ENCODE measurements at regions of chr6 and their contacts with region 1.

Region 1: DNA sequence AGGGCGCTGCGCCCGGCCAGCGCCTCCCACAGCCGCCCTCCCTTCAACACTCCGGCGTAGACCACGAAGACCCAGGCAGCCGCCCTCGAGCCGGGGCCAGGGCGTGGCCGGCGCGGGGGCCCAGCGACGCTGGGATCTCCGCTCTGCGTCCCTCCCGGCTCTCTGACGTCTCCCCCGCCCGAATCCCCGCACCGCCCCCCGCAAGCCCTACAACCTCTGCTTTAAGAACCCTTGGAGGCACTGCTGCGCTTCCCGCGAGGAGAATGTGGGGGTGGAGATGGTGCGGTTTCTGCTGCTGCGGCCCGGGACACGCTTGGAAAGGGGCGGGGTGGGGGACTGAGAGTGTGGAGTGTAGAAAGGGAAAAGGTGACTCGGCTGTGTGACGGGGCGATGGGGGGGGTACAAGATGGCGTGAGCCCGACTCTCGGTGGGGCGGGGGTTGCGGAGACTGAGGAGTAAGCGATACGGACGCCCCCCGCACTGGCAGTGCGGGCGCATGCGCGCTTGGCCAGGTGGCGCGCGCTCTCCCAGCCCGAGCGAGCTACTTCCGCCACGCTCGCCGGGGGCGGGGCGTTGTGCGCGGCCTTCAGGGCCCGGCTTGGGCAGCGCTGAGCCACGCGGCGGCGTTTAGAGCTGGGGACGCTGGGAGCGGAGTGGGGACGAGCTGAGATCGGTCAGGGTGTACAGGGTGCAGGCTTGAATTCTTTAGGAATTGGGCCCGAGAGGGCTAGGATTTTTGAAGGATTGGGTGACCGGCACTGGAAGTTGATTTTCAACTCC is at the start of gene SUPT3H:
- DNase-seq: peak; percentile 97
- ATAC-seq: peak; percentile 89
- H3K4me3 Mint-ChIP-seq: peak within 1 kb of the TSS; percentile 99
- H3K27ac Mint-ChIP-seq: peak within 1 kb of the TSS; percentile 100
- H3K4me1 Mint-ChIP-seq: peaks cover 22% of the 10 kb centered on the region
- H3K27me3 Mint-ChIP-seq: no peaks in the 10 kb centered on the region
- total RNA-seq, gene SUPT3H: 15.5 TPM

Region 2: DNA sequence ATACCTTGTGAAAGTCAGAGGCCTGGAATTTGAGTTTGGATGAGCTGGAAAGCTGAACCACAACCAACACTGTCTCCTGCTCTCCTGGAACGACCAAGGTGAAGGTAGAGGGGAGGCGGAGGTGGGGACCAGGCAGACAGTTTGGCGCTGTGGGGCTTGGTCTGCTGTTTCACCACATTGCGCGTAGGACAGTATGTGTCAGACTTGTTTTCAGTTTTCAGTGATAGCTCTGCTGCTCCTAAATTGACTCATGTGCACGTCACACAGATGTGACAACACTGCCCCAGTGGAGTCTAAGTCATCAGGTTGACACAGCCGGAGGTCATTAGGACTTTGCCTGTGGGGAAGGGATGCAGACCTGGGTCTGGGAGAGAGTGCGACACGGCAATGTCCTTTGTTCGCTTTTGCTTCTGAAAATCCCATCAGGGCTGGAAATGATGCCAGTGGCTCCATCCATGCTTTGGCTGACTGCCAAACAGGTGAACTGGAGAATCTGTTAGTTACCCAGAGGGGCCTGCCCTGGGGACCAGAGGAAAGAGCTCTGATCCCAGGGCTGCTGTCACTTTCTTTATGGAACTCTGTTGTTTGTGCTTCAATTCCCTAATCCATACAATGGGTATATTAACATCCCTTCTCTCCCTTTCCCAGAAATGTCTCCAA is 734.7 kb before region 1 on chr6:
- CTCF ChIA-PET with region 1: no interaction called
- POLR2A ChIA-PET with region 1: no interaction called
- intact Hi-C with region 1: loop called in 1 of 2 experiments (anchors 5 kb)
- DNase-seq: peak; percentile 85
- ATAC-seq: peak; percentile 87
- H3K4me3 Mint-ChIP-seq: peak overlapping the region; percentile 21
- H3K27ac Mint-ChIP-seq: peak overlapping the region; percentile 93
- H3K4me1 Mint-ChIP-seq: peaks cover 38% of the 10 kb centered on the region
- H3K27me3 Mint-ChIP-seq: peaks cover 2% of the 10 kb centered on the region

Region 3: GRCh38 chr6:44906761-44907160 is 471.0 kb before region 1 on chr6:
- CTCF ChIA-PET with region 1: no interaction called
- POLR2A ChIA-PET with region 1: no interaction called
- intact Hi-C with region 1: no loop called
- DNase-seq: no peak
- ATAC-seq: no peak
- H3K4me3 Mint-ChIP-seq: no peak overlapping the region
- H3K27ac Mint-ChIP-seq: no peak overlapping the region
- H3K4me1 Mint-ChIP-seq: peaks cover 5% of the 10 kb centered on the region
- H3K27me3 Mint-ChIP-seq: no peaks in the 10 kb centered on the region

Region 4: GRCh38 chr6:44932651-44933091 is 445.1 kb before region 1 on chr6:
- CTCF ChIA-PET with region 1: no interaction called
- POLR2A ChIA-PET with region 1: no interaction called
- intact Hi-C with region 1: loop called in 1 of 2 experiments (anchors 5 kb)
- DNase-seq: peak; percentile 55
- ATAC-seq: peak; percentile 42
- H3K4me3 Mint-ChIP-seq: peak overlapping the region; percentile 67
- H3K27ac Mint-ChIP-seq: peak overlapping the region; percentile 81
- H3K4me1 Mint-ChIP-seq: peaks cover 52% of the 10 kb centered on the region
- H3K27me3 Mint-ChIP-seq: no peaks in the 10 kb centered on the region

Region 5: DNA sequence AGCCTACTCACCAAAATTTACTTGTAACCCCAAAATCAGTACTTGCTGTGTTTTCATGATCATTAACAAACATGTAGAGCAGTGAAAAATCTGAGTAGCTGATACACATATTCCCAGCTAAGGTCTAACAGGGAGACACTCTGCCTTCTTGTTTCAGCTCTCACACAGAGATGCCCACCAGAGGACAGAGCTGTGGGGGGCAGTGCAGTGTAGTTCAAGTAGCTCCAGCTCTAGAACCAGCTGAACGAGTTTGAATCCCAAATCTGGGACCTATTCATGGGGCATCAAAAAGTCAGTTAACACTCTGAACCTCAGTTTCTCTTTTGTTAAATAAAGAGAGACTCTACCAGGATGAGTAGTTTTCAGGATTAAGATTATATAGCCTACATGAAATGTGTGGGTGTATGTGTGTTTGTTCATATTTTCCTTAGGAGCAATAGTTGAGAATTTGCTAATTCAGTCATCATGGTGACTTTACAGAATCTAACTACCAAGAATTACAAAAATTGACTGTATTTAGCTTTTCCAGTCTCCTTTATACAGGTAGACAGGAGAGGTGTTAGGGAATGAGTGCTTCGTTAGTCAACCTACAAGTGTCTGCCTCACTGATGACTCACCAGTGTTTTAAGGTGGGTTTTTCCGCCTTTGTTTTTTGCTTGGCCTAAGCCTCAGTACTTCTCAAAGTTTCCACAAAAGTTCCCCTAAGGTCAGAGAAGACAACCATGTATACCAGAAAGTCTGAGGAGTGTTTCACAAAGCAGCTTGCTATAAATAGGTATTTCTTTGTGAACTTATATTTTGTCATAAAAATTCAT is 213.6 kb before region 1 on chr6:
- CTCF ChIA-PET with region 1: no interaction called
- POLR2A ChIA-PET with region 1: no interaction called
- intact Hi-C with region 1: loop called (anchors 1 kb)
- DNase-seq: peak; percentile 61
- ATAC-seq: peak; percentile 92
- H3K4me3 Mint-ChIP-seq: peak overlapping the region; percentile 21
- H3K27ac Mint-ChIP-seq: peak overlapping the region; percentile 93
- H3K4me1 Mint-ChIP-seq: peaks cover 47% of the 10 kb centered on the region
- H3K27me3 Mint-ChIP-seq: no peaks in the 10 kb centered on the region

Region 6: DNA sequence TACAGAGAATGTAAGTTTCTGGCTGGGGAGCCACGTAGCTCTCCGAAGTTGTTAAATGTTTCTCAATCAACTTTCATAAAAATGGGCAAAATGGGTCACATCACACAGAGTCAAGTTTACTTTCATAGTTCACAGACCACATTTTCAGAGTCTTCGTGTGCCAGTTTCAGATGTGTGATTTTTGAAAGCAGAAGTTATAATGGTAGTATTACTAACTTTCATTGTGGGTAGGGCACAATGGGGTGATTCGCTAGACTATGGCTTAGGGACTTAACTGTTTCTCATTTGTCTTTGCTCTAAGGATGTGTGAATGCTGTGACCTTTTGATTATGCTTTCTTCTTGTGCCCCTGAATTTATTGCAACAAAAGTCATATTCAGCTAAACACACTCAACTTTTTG is 109.0 kb after region 1 on chr6:
- CTCF ChIA-PET with region 1: no interaction called
- POLR2A ChIA-PET with region 1: no interaction called
- intact Hi-C with region 1: loop called in 1 of 2 experiments (anchors 2 kb)
- DNase-seq: peak; percentile 50
- ATAC-seq: peak; percentile 94
- H3K4me3 Mint-ChIP-seq: no peak overlapping the region
- H3K27ac Mint-ChIP-seq: peak overlapping the region; percentile 58
- H3K4me1 Mint-ChIP-seq: peaks cover 53% of the 10 kb centered on the region
- H3K27me3 Mint-ChIP-seq: peaks cover 2% of the 10 kb centered on the region

Region 7: GRCh38 chr6:45830441-45831139 is 452.8 kb after region 1 on chr6:
- CTCF ChIA-PET with region 1: no interaction called
- POLR2A ChIA-PET with region 1: no interaction called
- intact Hi-C with region 1: loop called in 1 of 2 experiments (anchors 1 kb)
- DNase-seq: peak; percentile 79
- ATAC-seq: peak; percentile 79
- H3K4me3 Mint-ChIP-seq: peak overlapping the region; percentile 63
- H3K27ac Mint-ChIP-seq: peak overlapping the region; percentile 93
- H3K4me1 Mint-ChIP-seq: peaks cover 46% of the 10 kb centered on the region
- H3K27me3 Mint-ChIP-seq: peaks cover 4% of the 10 kb centered on the region

Measured in activated CD4-positive, alpha-beta T cell treated with anti-CD3 and anti-CD28 coated beads for 36 hours (primary cell).